ENCODE measurements at regions of chr11 and their contacts with region 1.

Region 1: DNA sequence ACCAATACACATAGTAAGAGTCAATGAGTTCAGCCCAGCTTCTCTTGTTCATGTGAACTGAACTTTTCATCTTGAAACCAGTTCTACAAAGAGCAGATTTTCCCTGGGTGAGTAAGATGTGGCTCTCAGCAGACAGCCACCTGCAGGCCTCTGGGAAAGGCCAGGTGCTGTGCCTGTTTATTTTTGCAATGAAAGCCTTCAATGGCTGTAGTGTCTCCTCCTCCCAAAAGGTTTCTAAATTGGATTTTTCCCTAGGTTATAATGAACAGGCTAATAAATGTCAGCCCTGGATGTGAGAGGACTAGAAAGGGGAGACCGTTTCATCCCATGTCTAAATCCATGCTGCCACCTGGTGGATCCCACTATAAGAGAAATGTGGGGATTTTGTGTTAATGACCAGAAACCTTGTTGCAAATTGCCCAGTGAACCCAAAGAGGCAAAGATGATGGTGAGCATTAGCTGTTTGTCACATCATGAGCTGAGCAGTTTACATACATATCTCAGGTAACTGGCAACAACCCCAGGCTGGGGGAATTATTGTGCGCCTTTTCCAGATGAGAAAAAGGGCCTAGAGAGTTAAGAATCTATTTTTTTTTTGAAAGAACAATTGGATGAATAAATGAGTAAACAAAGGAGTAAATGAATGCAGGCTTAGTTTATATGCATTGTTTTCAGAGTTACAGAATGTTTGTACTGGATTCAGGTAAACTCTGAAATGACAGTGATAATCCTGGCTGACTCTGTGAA is 12.7 kb downstream of the C11orf91 start:
- DNase-seq: peak; percentile 91
- H3K4me3 ChIP-seq: no peak overlapping the region
- H3K27ac ChIP-seq: no peak overlapping the region
- H3K4me1 ChIP-seq: peaks cover 23% of the 10 kb centered on the region
- H3K27me3 ChIP-seq: no peaks in the 10 kb centered on the region
- CTCF ChIP-seq: peak; percentile 99

Region 2: DNA sequence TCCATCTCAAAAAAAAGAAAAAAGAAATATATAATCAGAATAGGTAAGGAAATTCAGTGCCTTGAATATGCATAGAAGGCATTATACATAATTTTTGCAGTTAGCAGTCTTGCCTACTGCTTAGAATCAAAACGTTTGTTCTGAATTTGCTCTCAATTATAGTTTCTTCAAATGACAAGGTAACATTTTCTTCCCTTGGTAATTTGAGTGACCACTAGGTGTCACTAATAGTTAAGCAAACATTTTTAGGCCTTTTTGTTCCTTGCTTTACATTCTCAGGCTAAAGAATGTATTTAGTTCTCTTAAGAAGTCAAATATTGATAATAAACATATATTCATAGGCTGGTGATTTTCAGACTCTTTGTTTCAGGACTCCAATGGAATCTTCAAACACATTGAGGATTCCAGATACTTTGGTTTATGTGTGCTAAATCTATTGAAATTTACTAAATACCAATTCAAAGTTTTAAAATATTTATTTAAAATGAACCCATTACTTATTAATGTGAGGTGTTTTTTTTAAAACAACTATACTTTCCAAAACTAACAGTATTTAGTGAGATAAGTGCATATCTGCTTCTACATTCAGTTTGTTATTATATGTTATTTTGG is 727.2 kb before region 1 on chr11:
- CTCF ChIA-PET with region 1: no interaction called
- POLR2A ChIA-PET with region 1: no interaction called
- intact Hi-C with region 1: loop called (anchors 2 kb)
- DNase-seq: peak; percentile 87
- H3K4me3 ChIP-seq: no peak overlapping the region
- H3K27ac ChIP-seq: no peak overlapping the region
- H3K4me1 ChIP-seq: no peaks in the 10 kb centered on the region
- H3K27me3 ChIP-seq: no peaks in the 10 kb centered on the region
- CTCF ChIP-seq: peak; percentile 96

Region 3: DNA sequence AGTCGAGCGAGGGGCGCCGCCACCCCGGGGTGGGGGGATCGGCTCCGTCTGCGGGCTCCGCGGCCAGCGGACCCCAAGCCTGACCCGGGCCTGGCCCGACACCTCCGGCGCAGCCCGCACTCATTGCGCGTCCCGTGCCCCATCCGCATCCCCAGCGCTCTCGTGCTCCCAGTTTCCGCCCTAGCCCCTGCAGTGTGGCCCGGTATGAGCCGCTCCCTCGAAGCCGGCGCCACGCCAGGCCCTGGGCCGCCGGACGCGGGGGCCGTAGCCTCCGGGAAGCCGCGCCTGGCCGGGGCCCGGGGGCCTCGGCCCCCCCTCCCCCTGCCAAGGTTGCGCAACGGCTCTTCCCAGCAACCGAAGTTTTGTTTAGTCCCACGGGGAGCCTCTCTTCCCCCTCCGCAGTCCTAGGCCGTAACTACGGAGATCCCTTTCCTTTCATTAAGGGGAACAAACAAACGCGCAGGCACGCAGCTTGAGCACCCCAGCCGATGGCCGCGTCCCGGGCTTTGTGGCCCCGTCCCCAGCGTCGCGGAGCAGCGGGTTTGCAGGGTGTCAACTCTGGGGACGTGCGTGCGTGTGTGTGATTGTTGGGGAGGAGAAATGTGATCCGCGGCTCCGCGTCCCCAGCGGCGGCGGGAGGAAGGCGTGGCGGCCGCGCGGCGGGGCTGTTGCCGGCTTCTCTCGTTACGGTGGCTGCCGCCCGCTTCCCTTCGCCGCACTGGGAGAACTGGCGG is 429.8 kb before region 1 on chr11:
- CTCF ChIA-PET with region 1: no interaction called
- POLR2A ChIA-PET with region 1: no interaction called
- intact Hi-C with region 1: loop called (anchors 5 kb)
- DNase-seq: peak; percentile 97
- H3K4me3 ChIP-seq: peak overlapping the region; percentile 66
- H3K27ac ChIP-seq: peak overlapping the region; percentile 97
- H3K4me1 ChIP-seq: peaks cover 35% of the 10 kb centered on the region
- H3K27me3 ChIP-seq: no peaks in the 10 kb centered on the region
- CTCF ChIP-seq: peak; percentile 58; the same call in 1 of the 2 replicates

Region 4: DNA sequence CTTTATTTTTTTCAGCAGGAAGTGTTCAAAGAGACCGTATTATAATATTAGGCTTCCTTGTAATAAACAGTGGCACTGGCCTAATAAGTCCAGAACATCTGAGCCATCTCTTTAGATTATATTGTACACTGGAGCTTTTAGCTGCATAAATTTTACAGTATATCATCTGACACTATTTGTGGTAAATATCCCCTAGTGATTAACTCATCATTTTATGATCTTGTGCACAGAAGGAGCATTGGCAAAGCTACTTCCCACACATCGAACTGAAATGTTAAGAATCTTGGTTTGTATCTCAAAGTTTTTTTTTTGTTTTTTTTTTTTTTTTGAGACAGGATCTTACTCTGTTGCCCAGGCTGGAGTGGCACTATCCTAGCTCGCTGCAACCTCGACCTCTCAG is 268.0 kb before region 1 on chr11:
- CTCF ChIA-PET with region 1: no interaction called
- POLR2A ChIA-PET with region 1: no interaction called
- intact Hi-C with region 1: no loop called
- DNase-seq: no peak
- H3K4me3 ChIP-seq: no peak overlapping the region
- H3K27ac ChIP-seq: no peak overlapping the region
- H3K4me1 ChIP-seq: no peaks in the 10 kb centered on the region
- H3K27me3 ChIP-seq: peaks cover 32% of the 10 kb centered on the region
- CTCF ChIP-seq: no peak

Region 5: DNA sequence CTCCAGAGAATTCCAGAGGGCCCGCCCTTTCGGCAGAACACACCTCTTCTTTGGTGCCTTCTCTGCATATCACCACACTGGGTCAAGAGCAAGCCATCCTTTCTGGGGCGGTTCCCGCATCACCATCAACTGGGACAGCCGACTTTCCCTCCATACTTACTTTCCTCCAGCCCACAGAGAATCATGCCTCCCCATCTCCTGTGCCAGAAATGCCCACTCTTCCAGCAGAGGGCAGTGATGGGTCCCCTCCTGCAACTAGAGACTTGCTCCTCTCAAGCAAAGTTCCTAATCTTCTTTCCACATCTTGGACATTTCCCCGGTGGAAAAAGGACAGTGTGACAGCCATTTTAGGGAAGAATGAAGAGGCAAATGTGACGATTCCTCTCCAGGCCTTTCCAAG is 145.0 kb before region 1 on chr11:
- CTCF ChIA-PET with region 1: interaction called, 13 read pairs
- POLR2A ChIA-PET with region 1: no interaction called
- intact Hi-C with region 1: loop called (anchors 1 kb)
- DNase-seq: peak; percentile 80
- H3K4me3 ChIP-seq: no peak overlapping the region
- H3K27ac ChIP-seq: no peak overlapping the region
- H3K4me1 ChIP-seq: no peaks in the 10 kb centered on the region
- H3K27me3 ChIP-seq: peaks cover 43% of the 10 kb centered on the region
- CTCF ChIP-seq: peak; percentile 94

Region 6: DNA sequence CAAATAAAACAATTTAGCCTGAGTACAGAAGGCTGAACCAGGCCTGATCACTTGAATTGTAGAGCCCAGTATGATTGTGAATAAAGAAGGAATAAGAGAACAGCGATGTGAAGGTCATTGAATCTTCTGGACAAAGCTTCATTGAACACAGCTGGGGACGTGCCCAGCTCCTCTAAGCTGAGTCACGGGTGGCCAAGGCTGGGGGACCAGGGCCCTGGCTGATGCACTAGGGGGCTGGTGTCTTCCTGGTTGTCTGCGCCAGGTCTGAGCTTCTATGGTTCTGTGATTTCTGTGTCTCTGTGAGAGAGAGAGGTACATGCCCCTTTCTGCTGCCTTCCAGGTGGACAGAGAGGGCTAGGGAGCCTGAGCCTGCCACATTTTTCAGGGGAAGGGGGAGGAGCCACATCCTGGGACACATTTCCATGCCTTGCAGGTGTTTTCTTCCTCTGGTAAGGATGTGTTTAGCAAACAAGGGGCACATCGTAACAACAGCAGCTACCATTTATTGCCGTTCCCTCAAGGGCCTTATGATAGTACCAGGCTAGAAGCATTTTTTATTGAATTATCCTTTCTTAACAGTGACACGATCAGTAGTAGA is 123.0 kb before region 1 on chr11:
- CTCF ChIA-PET with region 1: no interaction called
- POLR2A ChIA-PET with region 1: no interaction called
- intact Hi-C with region 1: no loop called
- DNase-seq: no peak
- H3K4me3 ChIP-seq: no peak overlapping the region
- H3K27ac ChIP-seq: no peak overlapping the region
- H3K4me1 ChIP-seq: no peaks in the 10 kb centered on the region
- H3K27me3 ChIP-seq: peaks cover 9% of the 10 kb centered on the region
- CTCF ChIP-seq: no peak

Measured in A673 (cell line).